AG04449 (cell line): ENCODE measurements at regions of chr5 and their contacts with region 1.

Region 1: DNA sequence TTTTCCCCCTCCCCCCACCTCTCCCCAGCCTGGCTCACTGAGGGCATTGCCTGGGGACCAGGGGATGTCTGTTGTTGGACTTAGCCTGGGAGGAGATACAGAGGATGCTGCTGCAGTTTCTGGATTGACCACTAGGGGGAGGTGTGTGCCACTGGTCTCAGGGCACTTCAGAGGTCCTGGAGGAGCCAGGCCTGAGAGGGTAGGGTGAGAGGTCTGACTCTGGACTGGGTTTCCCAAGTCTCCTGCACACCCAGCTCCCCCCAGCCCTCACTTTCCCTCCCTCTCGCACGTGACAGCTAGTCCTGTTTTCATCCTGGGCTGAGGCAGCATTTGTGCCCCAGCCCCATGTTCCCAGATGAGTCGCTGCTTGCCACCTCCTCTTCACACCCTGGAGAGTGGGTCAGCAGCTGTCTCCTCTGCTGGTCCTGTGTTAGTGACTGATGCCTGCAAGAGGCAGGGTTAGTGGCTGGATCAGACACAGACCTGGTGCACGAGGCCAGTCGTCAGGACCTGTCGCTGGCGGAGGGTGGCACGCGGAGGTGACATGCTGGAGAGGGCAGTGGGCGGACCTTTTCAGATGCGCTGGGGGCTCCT is 4.4 kb downstream of the IL3 start:
- DNase-seq: no peak
- H3K4me3 ChIP-seq: no peak overlapping the region
- CTCF ChIP-seq: peak; percentile 94

Region 2: GRCh38 chr5:131996207-131997025 is 68.4 kb before region 1 on chr5:
- CTCF ChIA-PET with region 1: no interaction called
- POLR2A ChIA-PET with region 1: no interaction called
- DNase-seq: no peak
- H3K4me3 ChIP-seq: no peak overlapping the region
- CTCF ChIP-seq: no peak

Region 3: GRCh38 chr5:132044207-132044606 is 20.6 kb before region 1 on chr5:
- CTCF ChIA-PET with region 1: interaction called, 21 read pairs
- POLR2A ChIA-PET with region 1: no interaction called
- DNase-seq: no peak
- H3K4me3 ChIP-seq: no peak overlapping the region
- CTCF ChIP-seq: no peak

Region 4: DNA sequence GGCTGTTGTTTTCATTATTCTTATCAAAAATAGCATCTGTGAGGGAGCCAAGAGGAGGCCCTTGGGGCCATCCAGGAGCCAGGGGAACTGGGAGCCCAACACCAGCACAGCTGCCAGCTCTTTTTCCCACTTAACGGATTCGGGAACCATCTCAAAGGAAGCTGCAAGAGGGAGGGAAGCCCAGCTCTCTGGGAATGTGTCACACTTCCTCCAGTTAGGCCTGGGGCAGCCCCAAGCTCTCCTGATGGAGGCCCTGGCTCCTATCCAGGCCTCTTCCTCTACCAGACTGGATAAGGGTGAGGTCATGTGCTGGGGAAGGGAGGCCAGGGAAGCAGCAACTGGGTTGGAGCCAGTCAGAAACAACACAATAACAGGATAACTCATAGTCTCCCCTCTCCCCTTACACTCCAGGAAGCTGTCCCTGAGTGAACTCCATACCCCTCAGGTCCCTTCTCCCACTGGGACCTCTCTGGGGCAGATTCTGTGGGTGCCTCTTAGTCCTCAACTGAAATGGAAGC is 21.5 kb after region 1 on chr5:
- CTCF ChIA-PET with region 1: interaction called, 79 read pairs
- POLR2A ChIA-PET with region 1: no interaction called
- DNase-seq: no peak
- H3K4me3 ChIP-seq: no peak overlapping the region
- CTCF ChIP-seq: no peak

Region 5: DNA sequence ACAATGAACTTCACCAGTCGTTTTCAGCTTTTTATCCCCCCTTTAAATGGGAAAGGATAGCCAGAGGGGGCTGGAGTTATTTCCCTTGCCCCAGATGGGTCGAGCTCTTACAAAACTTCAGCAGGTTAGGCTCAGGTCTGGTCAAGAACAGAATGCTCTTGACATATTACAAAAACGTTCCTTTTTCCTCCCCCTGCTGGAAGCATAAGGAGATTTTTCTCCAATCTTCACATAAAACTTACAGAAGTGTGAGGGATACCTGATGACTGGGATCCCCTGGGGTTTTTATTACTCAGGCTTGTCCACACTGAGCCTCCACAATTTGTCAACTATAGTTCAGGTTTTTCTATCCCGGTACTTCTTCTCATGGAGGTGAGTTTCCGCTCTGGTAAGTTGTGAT is 69.5 kb after region 1 on chr5:
- CTCF ChIA-PET with region 1: interaction called, 111 read pairs
- POLR2A ChIA-PET with region 1: no interaction called
- DNase-seq: no peak
- H3K4me3 ChIP-seq: no peak overlapping the region
- CTCF ChIP-seq: peak; percentile 25

Region 6: DNA sequence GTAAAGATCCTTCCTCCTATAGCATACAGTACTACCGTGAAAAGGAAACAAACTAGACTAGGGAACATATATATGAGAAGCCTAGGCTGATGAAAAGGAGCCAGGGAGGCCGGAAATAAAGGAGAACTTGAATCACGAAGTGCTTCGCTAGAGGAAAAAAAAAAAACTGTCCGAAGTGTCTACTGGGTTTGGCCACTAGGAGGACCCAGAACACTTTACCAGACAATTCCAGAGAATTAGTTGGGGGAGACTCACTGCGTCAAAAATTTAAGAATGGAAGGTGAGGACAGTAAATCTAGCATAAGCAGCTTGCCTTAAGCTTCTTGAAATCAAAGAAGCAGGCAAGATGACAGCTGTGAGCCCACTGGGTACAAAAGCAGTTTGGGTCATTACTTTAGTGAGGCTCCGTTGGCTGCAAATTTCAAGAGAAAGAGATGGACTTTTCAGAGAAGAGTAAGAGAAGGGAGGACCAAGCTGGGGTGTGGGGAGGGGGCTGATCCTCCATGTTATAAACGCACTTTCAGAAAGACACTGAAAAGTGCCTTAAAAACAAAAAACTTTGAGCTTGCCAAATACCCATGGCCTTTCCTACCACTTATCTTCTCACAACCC is 115.4 kb after region 1 on chr5:
- CTCF ChIA-PET with region 1: interaction called, 92 read pairs
- POLR2A ChIA-PET with region 1: no interaction called
- DNase-seq: peak; percentile 19
- H3K4me3 ChIP-seq: no peak overlapping the region
- CTCF ChIP-seq: peak; percentile 61